ENCODE measurements at regions of chr15 and their contacts with region 1.

Region 1: DNA sequence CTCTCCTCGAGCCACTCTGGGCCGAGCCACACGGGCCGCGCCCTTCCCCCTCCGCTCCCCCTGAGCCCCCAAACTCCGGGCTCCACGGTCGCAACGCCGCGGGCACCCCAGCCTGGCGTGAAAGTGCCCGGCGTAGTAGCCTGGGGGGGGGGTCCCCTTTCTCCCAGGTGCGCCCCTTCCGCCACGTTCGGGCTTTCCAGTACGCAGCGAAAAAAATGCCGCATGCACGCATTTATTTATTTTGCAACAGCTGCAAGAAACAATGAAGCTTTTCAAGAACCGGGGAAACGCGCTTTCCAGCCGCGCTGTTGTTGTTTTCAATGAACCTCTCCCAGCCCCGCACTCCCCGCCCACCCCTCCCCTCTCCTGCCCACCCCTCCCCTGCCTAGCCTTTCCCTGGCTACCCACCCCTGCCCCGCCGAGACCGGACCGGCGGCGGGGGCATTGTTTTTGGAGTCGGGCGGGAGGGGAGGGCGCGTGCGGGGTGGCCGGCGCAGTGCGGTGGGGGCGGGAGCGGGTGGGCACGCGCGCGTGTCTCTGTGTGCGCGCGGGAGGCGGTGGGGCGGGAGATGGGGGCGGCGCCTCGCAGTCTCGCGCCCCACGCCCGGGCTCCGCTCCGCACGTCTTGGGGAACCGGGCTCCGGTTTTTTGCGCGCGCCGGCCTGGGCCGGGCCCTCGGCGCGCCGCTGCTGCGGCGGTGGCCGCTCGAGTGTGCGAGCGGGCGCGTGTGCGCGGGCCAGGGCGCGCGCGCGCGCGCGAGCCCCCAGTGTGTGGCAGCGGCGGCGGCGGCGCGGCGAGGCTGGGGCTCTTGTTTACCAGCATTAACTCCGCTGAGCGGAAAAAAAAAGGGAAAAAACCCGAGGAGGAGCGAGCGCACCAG is at the start of gene IGF1R:
- DNase-seq: peak; percentile 95
- total RNA-seq, gene IGF1R: 57.2 TPM

Region 2: GRCh38 chr15:98518823-98519561 is 129.0 kb before region 1 on chr15:
- intact Hi-C with region 1: loop called (anchors 2 kb)
- DNase-seq: no peak

Region 3: GRCh38 chr15:98727115-98728085 is 79.4 kb after region 1 on chr15:
- intact Hi-C with region 1: loop called (anchors 5 kb)
- DNase-seq: peak; percentile 95

Region 4: GRCh38 chr15:98779463-98780071 is 131.6 kb after region 1 on chr15:
- intact Hi-C with region 1: loop called (anchors 2 kb)
- DNase-seq: peak; percentile 90

Region 5: DNA sequence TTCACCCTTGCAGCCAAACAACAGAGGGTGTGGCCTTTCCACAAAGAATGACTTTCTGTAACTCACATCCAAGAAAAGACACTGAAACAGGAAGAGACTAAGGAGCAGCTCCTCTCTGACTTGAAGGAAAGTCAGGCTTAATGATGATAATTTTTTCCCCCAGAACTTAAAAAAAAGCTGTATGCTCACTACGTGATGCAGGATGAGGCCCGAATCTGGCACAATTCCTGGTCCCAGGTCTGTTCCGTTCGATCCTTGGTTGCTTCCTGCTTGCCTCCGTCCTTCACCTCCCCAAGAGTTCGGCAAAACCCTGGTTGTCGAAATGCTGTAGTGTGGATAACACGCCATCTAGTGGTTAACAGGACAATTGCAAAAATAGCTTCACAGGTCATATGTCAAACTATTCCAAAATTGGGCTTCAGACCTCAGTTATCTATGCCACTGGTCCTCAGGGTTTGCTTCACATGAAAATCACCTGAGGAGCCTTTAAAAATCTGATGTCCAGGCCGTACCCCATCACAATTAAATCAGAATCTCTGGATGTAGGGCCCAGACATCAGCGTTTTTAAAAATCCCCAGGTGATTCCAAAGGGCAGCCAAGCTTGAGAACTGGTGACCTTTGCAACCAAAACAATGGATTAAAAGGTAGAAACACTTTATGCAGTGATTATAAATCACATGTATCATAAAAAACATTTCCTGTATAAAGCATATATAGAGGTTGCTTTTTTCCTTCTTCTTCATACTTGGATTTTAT is 428.7 kb after region 1 on chr15:
- intact Hi-C with region 1: loop called (anchors 2 kb)
- DNase-seq: no peak